MCF 10A (cell line): ENCODE measurements at regions of chr10 and their contacts with region 1.

Region 1: GRCh38 chr10:55287346-55287745 is 486.3 kb upstream of the PCDH15 start:
- DNase-seq: peak; percentile 5
- H3K4me3 Mint-ChIP-seq: no peak overlapping the region
- H3K27ac Mint-ChIP-seq: no peak overlapping the region
- H3K4me1 Mint-ChIP-seq: no peaks in the 10 kb centered on the region
- H3K27me3 Mint-ChIP-seq: peaks cover 36% of the 10 kb centered on the region
- CTCF ChIP-seq: no peak

Region 2: DNA sequence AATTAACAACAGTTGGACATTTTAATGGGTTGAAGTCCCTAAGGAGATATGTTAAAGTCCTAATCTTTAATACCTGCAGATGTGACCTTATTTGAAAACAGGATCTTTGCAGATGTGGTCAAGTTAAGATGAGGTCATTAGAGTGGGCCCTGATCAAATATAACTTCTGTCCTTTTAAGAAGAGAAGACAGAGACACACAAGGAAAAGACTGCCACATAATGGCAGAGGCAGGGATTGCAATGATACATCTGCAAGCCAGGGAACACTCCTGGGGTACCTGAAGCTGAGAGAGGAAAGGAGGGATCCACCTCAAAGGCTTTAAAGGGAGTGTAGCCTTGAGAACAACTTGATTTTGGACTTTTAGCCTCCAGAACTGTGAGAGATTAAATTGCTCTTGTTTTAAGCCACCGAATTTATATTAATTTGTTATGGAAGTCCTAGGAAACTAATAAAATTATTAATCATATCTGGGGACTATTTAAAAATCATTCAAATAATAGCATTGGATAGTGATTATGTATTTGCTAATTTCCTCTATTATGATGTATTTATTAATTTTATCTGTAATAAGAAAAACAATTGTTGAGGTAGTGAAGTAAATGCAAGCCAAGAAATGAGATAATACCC is 213.7 kb after region 1 on chr10:
- CTCF ChIA-PET with region 1: no interaction called
- POLR2A ChIA-PET with region 1: no interaction called
- intact Hi-C with region 1: loop called (anchors 1 kb)
- DNase-seq: peak; percentile 53
- H3K4me3 Mint-ChIP-seq: no peak overlapping the region
- H3K27ac Mint-ChIP-seq: no peak overlapping the region
- H3K4me1 Mint-ChIP-seq: no peaks in the 10 kb centered on the region
- H3K27me3 Mint-ChIP-seq: peaks cover 33% of the 10 kb centered on the region
- CTCF ChIP-seq: peak; percentile 46

Region 3: DNA sequence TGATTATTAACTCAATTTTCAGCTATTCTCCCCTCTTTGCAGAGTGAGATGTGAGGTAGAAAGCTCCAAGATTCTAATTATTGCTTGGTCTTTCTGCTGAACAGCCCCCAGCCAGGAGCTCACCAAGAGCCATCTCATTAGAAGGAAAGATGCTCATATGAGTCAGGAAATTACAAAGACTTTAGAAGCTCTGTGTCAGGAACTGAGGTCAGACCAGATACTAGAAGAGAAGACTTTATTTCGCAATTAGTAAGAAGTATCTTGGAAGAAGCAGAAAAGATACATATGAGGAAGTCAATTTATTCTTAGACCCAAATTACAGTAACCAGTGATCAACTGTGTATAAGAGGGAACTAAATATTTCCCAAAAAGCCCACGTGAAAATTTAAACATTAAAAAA is 446.8 kb after region 1 on chr10:
- CTCF ChIA-PET with region 1: no interaction called
- POLR2A ChIA-PET with region 1: no interaction called
- intact Hi-C with region 1: loop called (anchors 2 kb)
- DNase-seq: no peak
- H3K4me3 Mint-ChIP-seq: no peak overlapping the region
- H3K27ac Mint-ChIP-seq: no peak overlapping the region
- H3K4me1 Mint-ChIP-seq: no peaks in the 10 kb centered on the region
- H3K27me3 Mint-ChIP-seq: peaks cover 43% of the 10 kb centered on the region
- CTCF ChIP-seq: no peak

Region 4: GRCh38 chr10:55837271-55837670 is 549.9 kb after region 1 on chr10:
- CTCF ChIA-PET with region 1: no interaction called
- POLR2A ChIA-PET with region 1: no interaction called
- intact Hi-C with region 1: no loop called
- DNase-seq: no peak
- H3K4me3 Mint-ChIP-seq: no peak overlapping the region
- H3K27ac Mint-ChIP-seq: no peak overlapping the region
- H3K4me1 Mint-ChIP-seq: no peaks in the 10 kb centered on the region
- H3K27me3 Mint-ChIP-seq: peaks cover 50% of the 10 kb centered on the region
- CTCF ChIP-seq: no peak